Panc1 (cell line): ENCODE measurements at regions of chr2 and their contacts with region 1.

Region 1: DNA sequence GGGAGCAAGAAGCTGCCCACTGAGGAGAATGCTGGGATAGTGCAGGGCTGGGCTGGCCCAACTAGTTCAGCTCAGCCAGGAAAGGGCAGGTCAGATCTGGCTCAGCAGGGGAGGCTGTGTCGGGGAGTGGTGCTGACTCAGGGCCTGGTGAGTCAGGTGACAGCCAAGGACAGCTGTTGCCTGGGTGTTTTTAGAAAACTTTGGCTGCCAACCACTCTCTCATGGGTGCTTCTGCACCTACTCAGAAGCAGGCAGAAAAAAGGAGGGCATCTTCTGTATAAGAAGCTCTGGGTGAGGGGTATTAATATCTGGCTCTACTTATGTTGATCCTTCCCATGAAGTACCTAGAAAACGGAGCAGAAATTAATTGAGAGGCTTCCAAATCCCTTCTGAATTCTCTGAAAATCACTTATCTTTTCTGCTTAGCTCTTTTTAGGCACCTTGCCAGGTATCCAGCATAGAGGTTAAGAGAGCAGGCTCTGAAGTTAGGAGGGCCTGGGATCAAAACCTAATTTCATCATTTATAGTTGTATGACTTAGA is 15.6 kb upstream of the RAB10 start:
- DNase-seq: peak; percentile 83
- ATAC-seq: peak; percentile 98
- H3K4me3 ChIP-seq: no peak overlapping the region
- H3K27ac ChIP-seq: peak overlapping the region; percentile 57
- H3K4me1 ChIP-seq: peaks cover 26% of the 10 kb centered on the region
- H3K27me3 ChIP-seq: no peaks in the 10 kb centered on the region
- CTCF ChIP-seq: no peak

Region 2: GRCh38 chr2:25936889-25937545 is 81.2 kb before region 1 on chr2:
- CTCF ChIA-PET with region 1: no interaction called
- POLR2A ChIA-PET with region 1: no interaction called
- in situ Hi-C with region 1: no loop called
- intact Hi-C with region 1: no loop called
- DNase-seq: no peak
- ATAC-seq: peak; percentile 54; the same call in 1 of the 2 replicates
- H3K4me3 ChIP-seq: no peak overlapping the region
- H3K27ac ChIP-seq: 0 out of 2 replicates have a peak overlapping the region, but pooled peaks have one; percentile 24
- H3K4me1 ChIP-seq: no peaks in the 10 kb centered on the region
- H3K27me3 ChIP-seq: no peaks in the 10 kb centered on the region
- CTCF ChIP-seq: no peak

Region 3: DNA sequence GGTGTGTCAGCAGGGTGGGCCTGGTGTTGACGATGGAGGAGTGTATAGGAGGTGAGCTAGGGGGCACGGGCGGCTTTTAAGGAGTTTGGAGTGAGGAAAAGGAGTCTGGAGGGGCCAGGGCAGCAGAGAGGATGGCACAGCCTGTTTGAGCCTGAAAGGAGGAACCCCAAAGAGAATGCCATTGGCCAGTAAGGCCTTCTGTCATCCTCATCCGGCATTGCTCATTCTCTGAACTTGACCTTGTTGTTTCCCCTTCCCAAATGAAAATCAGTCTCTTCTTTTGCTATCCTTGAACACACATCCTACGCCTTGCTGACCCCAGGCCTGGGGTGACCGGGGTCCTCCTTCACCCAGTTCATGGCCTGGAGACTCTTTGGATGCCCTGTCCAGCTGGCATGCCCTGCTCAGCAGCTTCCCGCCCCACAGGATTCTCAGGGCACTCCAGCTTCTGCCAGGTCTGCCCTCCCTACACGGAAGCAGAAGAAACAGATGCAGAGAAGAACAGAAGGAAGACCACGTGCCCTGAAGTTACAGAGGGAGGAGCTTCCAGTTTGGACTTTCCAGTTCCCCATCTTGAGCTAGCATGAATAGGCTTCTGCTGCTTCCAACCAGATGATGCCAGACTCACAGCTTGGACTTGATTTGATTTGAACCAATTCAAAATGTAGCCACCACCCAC is 15.5 kb before region 1 on chr2:
- CTCF ChIA-PET with region 1: interaction called, 4 read pairs
- POLR2A ChIA-PET with region 1: interaction called, 11 read pairs
- in situ Hi-C with region 1: no loop called
- intact Hi-C with region 1: no loop called
- DNase-seq: no peak
- ATAC-seq: 0 out of 2 replicates have a peak, but pooled peaks have one; percentile 9
- H3K4me3 ChIP-seq: no peak overlapping the region
- H3K27ac ChIP-seq: peak overlapping the region; percentile 45
- H3K4me1 ChIP-seq: peaks cover 25% of the 10 kb centered on the region
- H3K27me3 ChIP-seq: no peaks in the 10 kb centered on the region
- CTCF ChIP-seq: no peak

Region 4: DNA sequence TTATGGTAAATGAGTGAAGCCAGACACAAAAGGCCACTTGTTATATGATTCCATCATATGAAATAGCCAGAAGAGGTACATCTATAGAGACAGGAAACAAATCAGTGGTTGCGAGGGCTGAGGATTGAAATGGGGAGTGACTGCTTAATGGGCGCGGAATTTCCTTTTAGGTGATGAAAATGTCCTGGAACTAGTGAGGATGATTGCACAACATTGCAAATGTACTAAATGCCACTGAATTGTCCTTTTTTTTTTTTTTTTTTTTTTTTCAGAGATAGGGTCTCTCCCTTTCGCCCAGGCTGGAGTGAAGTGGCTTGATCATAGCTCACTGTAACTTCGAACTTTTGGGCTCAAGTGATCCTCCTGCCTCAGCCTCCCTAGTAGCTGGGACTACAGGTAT is 139.3 kb after region 1 on chr2:
- CTCF ChIA-PET with region 1: no interaction called
- POLR2A ChIA-PET with region 1: no interaction called
- in situ Hi-C with region 1: no loop called
- intact Hi-C with region 1: no loop called
- DNase-seq: no peak
- ATAC-seq: no peak
- H3K4me3 ChIP-seq: no peak overlapping the region
- H3K27ac ChIP-seq: no peak overlapping the region
- H3K4me1 ChIP-seq: no peaks in the 10 kb centered on the region
- H3K27me3 ChIP-seq: no peaks in the 10 kb centered on the region
- CTCF ChIP-seq: no peak

Region 5: DNA sequence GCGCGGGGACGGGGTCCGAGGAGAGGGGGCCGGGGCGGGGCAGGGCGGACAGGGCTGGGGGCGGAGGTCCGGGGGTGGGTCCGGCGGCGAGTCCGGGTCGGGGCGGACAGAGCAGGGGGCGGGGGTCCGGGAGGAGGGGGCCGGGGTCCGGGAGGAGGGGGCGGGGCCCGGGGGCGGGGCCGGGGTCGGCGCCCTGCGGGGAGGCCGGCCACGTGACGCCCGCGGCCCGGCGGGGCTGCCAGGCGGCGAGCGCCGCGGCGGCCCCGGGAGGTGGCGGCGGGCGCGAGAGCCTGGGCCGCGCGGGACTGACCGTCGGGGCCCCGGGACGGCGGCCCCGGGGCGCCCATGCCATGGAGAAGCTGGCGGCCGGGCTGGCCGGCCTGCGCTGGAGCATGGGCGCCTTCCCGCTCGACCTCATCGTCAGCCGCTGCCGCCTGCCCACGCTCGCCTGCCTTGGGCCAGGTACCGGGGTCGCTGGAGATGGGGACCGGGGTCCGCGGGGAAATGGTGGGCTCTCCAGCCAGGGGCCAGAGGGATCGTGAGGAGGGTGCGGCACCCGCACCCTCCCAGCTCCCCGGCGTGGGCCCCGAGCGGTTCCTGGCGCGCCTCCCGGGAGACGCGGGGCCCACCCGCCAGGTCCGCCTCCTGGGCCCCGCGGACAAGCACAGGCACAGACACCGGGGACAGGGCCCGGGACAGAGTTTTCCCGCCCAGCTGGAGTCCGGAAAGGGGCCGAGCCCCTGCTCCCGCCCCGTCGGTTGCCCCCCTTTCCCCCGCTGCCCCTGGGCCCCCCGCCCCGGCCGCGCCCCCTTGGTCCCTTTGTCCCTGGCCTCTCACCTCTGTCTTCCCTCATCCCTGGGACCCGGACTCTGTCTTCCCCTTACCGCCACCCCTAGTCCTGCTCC is 154.9 kb after region 1 on chr2 and contains the start of gene GAREM2:
- CTCF ChIA-PET with region 1: no interaction called
- POLR2A ChIA-PET with region 1: no interaction called
- in situ Hi-C with region 1: no loop called
- intact Hi-C with region 1: no loop called
- DNase-seq: no peak
- ATAC-seq: peak; percentile 55
- H3K4me3 ChIP-seq: peak within 1 kb of the TSS; percentile 47 to 54
- H3K27ac ChIP-seq: no peak within 1 kb of the TSS
- H3K4me1 ChIP-seq: peaks cover 6% of the 10 kb centered on the region
- H3K27me3 ChIP-seq: no peaks in the 10 kb centered on the region
- CTCF ChIP-seq: no peak
- total RNA-seq, gene GAREM2: 12.4 TPM